Heart right ventricle (tissue), 16 donors: ENCODE measurements at regions of chr2 and their contacts with region 1.

Region 1: DNA sequence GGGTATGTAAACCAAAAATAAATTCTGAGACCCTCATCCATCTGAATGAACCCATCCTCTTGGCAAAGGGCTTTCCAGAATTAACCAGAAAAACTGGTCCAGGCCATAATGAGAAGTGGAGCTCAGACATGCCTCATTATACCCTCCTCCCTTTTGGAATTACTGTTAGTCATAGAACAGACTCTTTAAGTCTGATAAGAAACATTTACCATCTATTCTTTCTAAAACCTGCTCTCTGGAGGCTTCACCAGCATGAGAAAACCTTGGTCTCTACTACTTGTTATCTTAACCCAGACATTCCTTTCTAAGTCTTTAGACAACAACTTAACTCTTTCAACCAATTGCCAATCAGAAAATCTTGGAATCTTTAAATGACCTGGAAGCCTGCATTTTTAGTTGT is 82.8 kb downstream of the QPCT start:
- DNase-seq: no peak
- ATAC-seq: no peak
- H3K4me3 ChIP-seq: no peak overlapping the region
- H3K27ac ChIP-seq: no peak overlapping the region
- H3K4me1 ChIP-seq: peaks cover 0 to 12% (median 0%) of the 10 kb centered on the region in 9 donors
- H3K27me3 ChIP-seq: no peaks in the 10 kb centered on the region
- CTCF ChIP-seq: no peak

Region 2: DNA sequence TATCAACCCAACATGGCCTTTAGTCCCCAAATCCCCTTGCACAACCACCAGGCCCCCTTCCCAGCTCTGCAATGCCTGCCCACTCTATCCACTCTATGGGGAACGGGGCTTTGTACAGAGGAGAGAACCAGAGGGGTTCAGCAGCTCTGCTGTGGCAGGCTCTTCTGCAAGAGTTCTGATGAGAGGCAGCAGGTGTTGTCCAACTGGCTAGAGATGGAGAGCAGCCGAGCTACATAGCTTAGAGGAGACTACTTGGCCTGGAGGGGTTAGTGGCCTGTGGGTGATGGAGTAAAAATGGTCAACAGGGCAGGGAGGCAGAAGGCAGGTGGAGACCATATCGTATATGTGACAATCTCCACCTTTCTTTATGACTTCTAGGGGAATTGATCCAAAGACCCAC is 20.2 kb after region 1 on chr2:
- intact Hi-C with region 1: loop called in 1 of 10 experiments (anchors 2 kb)
- DNase-seq: no peak
- ATAC-seq: no peak
- H3K4me3 ChIP-seq: no peak overlapping the region
- H3K27ac ChIP-seq: no peak overlapping the region
- H3K4me1 ChIP-seq: no peaks in the 10 kb centered on the region
- H3K27me3 ChIP-seq: no peaks in the 10 kb centered on the region
- CTCF ChIP-seq: no peak